Right cardiac atrium (tissue), 5 donors: ENCODE measurements at regions of chr18 and their contacts with region 1.

Region 1: DNA sequence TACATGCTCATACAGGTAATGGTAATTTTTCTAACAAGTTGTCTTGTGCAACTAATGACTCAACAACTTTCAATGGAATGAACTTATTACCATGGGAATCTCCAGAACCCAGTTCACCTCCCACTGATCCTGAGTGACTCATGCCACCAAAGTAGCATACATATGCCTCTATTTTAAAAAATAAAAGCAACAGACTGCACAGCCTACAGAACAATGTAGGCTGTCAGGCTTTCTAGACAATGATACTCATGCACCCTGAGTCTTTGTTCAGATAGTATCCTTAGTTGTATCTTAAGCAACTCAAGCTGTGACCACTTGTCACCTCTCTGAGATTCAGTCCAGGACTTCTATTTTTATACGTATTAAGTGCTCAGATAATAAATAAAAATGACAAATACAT is 531.0 kb upstream of the SETBP1 start:
- DNase-seq: no peak
- ATAC-seq: peak in 1 of 2 donors; percentile 36
- H3K4me3 ChIP-seq: no peak overlapping the region
- H3K27ac ChIP-seq: no peak overlapping the region
- H3K4me1 ChIP-seq: no peaks in the 10 kb centered on the region
- H3K27me3 ChIP-seq: no peaks in the 10 kb centered on the region

Region 2: DNA sequence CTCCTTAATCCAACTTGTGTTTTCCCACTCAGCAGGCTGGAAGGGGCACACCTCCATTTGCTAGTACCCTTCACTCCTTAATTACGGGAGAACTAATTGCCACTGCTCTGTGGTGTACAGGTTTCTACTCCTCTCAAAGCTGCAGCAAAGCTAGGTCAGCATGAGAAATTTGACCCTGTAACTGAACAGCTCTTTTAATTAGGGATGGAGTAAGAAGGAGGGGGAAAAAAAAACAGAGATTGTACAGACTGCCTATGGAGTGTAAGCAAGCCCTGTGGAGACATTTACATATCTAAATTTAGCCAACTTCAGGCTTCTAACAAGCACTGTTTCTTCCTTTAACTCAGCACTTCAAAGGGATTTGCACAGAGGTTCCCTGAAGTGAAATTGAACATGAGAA is 98.7 kb before region 1 on chr18:
- intact Hi-C with region 1: loop called in 1 of 4 experiments (anchors 5 kb)
- DNase-seq: no peak
- ATAC-seq: no peak
- H3K4me3 ChIP-seq: no peak overlapping the region
- H3K27ac ChIP-seq: no peak overlapping the region
- H3K4me1 ChIP-seq: no peaks in the 10 kb centered on the region
- H3K27me3 ChIP-seq: no peaks in the 10 kb centered on the region

Region 3: DNA sequence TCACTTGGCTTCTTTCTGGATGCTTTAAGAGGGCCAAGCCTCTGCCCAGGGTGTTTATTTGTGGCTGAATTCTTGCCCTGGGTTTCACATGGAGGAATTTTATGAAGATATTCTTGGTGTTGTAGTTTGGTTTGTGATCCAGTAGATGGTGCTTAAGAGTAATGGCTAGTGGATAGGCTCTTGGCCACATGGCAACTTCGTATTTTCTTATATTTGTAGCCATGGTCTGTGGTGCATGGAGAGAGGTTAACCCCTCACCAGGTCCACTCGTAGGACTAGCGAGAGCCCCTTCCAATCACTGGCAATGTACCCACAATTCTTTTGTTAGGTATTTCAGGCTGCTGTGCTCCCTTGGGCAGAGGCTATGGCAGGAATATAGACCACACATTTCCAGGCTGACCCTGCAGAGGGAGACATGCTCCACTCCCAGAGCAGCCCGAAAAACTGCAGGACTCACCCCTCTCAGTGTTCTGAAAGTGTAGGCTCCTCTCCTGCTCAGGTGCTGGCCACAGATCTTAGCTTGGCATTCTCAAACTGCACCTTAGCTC is 51.1 kb before region 1 on chr18:
- intact Hi-C with region 1: no loop called
- DNase-seq: peak in 1 of 3 donors; percentile 38
- ATAC-seq: peak in 1 of 2 donors; percentile 32
- H3K4me3 ChIP-seq: no peak overlapping the region
- H3K27ac ChIP-seq: no peak overlapping the region
- H3K4me1 ChIP-seq: no peaks in the 10 kb centered on the region
- H3K27me3 ChIP-seq: no peaks in the 10 kb centered on the region

Region 4: GRCh38 chr18:44258576-44258975 is 108.9 kb after region 1 on chr18:
- intact Hi-C with region 1: no loop called
- DNase-seq: no peak
- ATAC-seq: no peak
- H3K4me3 ChIP-seq: no peak overlapping the region
- H3K27ac ChIP-seq: no peak overlapping the region
- H3K4me1 ChIP-seq: no peaks in the 10 kb centered on the region
- H3K27me3 ChIP-seq: no peaks in the 10 kb centered on the region